H1 (cell line): ENCODE measurements at regions of chr5 and their contacts with region 1.

Region 1: DNA sequence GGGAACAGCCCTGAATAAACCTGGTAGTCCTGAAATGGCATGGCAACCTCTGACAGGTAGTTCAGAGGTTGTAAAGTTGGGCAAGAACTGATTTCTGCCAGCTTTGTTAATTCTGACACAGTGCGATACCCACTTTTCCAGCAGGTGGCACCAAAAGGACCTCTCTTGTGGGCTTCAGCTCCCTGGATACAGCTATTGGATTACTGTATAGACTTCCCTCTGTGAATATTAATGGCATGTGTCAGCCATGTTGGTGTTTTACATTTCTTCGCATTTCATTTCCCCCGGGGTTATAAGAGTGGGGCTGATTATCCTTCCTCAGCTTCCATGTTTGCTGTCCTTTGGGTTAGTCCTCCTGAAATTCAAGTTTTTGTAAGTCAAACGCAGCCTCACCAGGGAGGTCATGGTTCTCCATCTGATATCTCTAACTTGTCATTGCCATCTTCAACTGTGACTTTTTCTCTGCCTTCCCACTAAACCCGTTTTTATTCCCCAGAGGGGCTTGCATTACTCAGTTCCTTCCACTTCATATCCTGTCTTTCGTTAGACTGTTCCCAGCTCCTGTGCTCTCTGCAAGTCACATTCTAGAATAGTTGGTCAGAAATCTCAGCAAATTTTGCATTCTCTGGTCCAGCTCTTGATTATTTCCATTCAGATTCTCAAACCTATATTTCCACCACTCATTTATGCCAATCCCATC is 135.6 kb downstream of the LIFR start:
- DNase-seq: peak in 1 of 2 experiments; percentile 72
- H3K4me3 ChIP-seq: no peak overlapping the region
- H3K27ac ChIP-seq: no peak overlapping the region
- H3K4me1 ChIP-seq: peaks cover 0 to 8% (median 3%) of the 10 kb centered on the region in 4 experiments; a peak in 3 of 7 replicates
- H3K27me3 ChIP-seq: no peaks in the 10 kb centered on the region
- CTCF ChIP-seq: peak; percentile 54 to 83 (median 68)
- EP300 ChIP-seq: no peak
- POLR2A ChIP-seq: no peak
- RAD21 ChIP-seq: peak; percentile 68 to 74

Region 2: GRCh38 chr5:38369692-38370091 is 51.1 kb before region 1 on chr5:
- CTCF ChIA-PET with region 1: interaction called, 11 read pairs
- POLR2A ChIA-PET with region 1: no interaction called
- DNase-seq: no peak
- H3K4me3 ChIP-seq: no peak overlapping the region
- H3K27ac ChIP-seq: no peak overlapping the region
- H3K4me1 ChIP-seq: no peaks in the 10 kb centered on the region
- H3K27me3 ChIP-seq: no peaks in the 10 kb centered on the region
- CTCF ChIP-seq: no peak
- EP300 ChIP-seq: no peak
- POLR2A ChIP-seq: no peak
- RAD21 ChIP-seq: no peak

Region 3: DNA sequence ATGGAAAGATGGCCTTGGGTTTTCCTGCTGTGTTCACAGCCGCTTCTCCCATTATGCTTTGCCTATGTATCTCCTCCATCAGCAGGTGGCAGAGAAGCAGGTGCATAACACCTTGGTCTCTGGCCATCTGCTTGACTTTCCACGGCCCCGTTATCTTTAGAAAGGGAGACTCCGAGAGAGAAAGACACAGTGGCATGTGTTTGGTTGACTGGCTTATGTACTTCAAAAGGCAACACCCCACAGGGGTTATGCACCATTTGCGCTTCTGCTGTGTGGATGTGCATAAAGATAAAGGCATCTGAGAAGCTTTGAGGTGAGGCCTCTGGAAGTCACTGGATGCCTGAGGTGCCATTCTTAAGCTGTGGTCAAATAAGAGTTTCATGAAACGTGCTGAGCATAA is 24.1 kb before region 1 on chr5:
- CTCF ChIA-PET with region 1: interaction called, 15 read pairs
- POLR2A ChIA-PET with region 1: no interaction called
- DNase-seq: no peak
- H3K4me3 ChIP-seq: no peak overlapping the region
- H3K27ac ChIP-seq: no peak overlapping the region
- H3K4me1 ChIP-seq: peaks cover 0 to 7% (median 0%) of the 10 kb centered on the region in 4 experiments; a peak in 2 of 7 replicates
- H3K27me3 ChIP-seq: no peaks in the 10 kb centered on the region
- CTCF ChIP-seq: no peak
- EP300 ChIP-seq: no peak
- POLR2A ChIP-seq: no peak
- RAD21 ChIP-seq: no peak

Region 4: DNA sequence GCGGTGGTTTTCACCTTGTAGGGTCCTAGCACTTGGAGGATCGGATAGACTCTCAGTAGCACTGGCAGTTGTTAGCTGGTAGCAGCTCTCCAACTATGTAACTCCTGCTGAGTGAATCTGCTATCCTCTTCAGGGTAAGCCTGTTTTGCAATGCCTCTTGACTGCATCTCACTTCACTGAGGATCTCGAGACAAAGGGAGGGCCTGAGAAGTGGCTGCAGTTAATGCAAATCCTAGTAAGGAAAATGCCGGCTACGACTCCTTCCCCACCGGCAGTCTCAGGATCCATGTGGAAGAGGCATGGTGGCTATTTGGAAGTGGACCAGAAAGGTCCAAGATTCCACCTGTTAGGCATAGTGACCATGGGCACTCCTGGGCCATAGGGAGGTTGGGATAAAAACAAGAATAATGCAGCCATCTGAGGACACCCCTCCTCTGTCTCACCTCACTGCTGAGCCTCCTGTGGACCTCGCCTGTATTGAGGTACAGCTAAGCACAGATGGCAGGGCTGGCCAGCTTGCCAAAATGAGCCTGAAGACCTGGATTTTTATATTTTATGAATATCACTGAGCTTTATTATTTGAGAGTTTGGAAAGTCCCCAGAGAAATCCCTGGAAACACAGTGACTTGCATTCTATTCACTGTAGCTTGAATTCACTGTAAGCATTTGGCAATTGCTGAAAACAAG is 10.4 kb before region 1 on chr5:
- CTCF ChIA-PET with region 1: interaction called, 26 read pairs
- POLR2A ChIA-PET with region 1: no interaction called
- DNase-seq: no peak
- H3K4me3 ChIP-seq: no peak overlapping the region
- H3K27ac ChIP-seq: no peak overlapping the region
- H3K4me1 ChIP-seq: peaks cover 0 to 2% (median 0%) of the 10 kb centered on the region in 4 experiments; a peak in 1 of 7 replicates
- H3K27me3 ChIP-seq: no peaks in the 10 kb centered on the region
- CTCF ChIP-seq: no peak
- EP300 ChIP-seq: no peak
- POLR2A ChIP-seq: no peak
- RAD21 ChIP-seq: no peak

Region 5: GRCh38 chr5:38441453-38442246 is 20.8 kb after region 1 on chr5:
- CTCF ChIA-PET with region 1: interaction called, 27 read pairs
- POLR2A ChIA-PET with region 1: interaction called, 3 read pairs
- DNase-seq: peak; percentile 70 to 89
- H3K4me3 ChIP-seq: no peak overlapping the region
- H3K27ac ChIP-seq: no peak overlapping the region
- H3K4me1 ChIP-seq: no peaks in the 10 kb centered on the region
- H3K27me3 ChIP-seq: no peaks in the 10 kb centered on the region
- CTCF ChIP-seq: peak; percentile 73 to 98 (median 97)
- EP300 ChIP-seq: no peak
- POLR2A ChIP-seq: no peak
- RAD21 ChIP-seq: peak; percentile 99 to 100

Region 6: DNA sequence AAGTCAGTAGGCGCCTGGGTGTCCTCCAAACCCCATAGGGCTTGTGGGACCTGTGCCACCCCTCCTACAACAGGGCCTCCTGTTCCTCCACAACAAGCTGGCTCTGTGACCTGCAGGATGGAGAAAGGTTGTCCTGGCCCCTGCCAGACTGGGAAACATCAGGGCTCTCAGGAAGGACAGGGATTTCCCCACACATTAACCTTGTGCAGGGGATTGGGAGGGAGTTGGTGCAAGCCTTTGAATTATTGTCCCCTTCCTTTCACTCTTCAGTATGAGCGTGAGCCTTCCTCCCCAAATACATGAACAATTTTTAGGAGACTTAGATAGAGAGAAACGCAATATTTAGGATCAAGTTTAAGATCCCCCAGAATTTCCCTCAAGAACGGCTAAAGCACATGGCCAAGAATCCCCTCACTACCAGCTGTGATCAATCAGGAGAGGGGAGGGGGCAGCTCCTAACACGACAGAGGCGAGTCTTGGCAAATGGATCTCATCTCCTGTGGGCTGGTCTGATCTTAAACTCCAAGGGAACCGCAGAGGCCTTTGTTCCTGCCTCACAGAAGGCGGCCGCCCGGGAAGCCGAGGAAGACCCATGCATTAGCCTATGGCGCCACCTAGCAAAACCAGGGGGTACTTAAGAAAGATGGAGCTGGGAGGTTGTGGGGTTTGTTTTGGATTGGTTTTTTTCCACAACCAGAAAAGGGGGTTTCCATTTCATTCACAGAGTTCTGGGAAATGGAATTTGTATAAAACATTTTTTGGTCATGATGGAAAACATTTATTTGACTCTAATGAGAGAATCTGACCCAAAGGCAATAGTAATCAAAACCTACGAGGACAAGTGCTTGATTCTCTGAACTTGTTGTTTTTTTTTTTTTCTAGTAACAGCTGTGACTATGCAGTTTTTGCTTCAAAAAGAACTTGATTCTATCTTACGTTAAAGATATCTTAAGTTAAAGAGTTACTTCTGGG is 388.8 kb after region 1 on chr5:
- CTCF ChIA-PET with region 1: interaction called, 73 read pairs
- POLR2A ChIA-PET with region 1: no interaction called
- DNase-seq: peak; percentile 60 to 84
- H3K4me3 ChIP-seq: no peak overlapping the region
- H3K27ac ChIP-seq: no peak overlapping the region
- H3K4me1 ChIP-seq: peaks cover 0 to 3% (median 0%) of the 10 kb centered on the region in 4 experiments; a peak in 2 of 7 replicates
- H3K27me3 ChIP-seq: peaks cover 0 to 3% (median 0%) of the 10 kb centered on the region in 4 experiments; a peak in 2 of 7 replicates
- CTCF ChIP-seq: peak; percentile 59 to 92 (median 80)
- EP300 ChIP-seq: no peak
- POLR2A ChIP-seq: no peak
- RAD21 ChIP-seq: peak; percentile 97 to 99